ENCODE measurements at regions of chr9 and their contacts with region 1.

Region 1: DNA sequence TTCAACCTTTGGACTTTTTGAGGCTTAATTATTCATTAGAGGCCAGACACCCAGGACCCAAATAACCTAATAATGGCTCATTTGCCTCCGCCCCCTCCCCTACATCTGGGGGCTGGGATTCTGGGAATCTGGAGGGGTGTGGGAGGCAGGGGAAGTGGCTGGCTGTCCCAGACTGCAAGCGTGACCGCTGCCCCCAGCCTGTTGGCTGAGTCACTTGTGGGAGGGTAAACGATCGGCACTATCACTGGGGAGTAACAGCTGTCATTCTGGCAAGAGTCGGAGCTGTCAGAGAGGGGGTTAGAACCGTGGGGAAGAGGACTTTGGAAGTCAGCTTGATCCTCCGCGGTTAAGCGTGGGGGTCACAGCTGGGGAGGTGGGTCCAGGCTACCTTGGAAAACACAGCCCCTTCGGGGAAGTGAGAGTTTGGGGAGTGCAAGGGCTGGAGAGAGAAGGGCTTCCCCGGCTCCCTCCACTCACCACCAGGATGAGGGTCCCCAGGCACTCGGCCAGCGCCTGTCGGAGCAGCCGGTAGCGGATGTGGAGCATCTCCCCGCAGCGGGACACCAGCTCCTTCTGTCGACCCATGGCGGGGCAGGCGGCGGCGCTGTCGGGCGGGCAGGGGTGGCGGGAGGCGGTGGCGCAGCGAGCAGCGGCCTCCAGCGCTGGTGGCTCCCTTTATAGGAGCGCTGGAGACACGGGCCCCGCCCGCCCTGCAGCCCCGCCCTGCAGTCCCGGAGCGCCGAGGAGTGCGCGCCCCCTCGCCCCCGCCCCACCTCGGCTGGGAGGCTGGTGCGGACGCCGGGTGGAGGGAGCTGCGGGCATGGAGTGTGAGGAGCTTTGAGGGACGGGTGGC is at the start of gene AQP3:
- DNase-seq: peak; percentile 65
- CTCF ChIP-seq: peak; percentile 22

Region 2: DNA sequence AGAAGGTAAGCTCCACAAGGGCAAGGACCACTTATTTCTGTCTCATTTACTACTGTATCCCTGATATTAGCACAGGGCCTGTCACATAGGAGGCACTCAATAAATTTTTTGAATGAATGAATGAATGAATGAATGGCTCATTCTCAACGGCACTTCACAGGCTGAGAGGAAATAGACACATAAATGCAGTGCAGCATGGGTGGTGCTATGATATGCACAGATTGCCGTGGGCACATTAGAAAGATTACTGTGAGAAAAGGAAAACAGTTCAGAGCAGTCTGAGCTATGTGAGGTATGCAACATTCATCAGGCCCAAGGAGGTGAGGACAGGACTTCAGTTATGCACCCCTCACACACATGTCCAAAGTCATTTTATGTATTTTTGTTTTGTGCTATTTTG is 32.9 kb after region 1 on chr9:
- CTCF ChIA-PET with region 1: interaction called, 3 read pairs
- POLR2A ChIA-PET with region 1: interaction called, 11 read pairs
- DNase-seq: no peak
- CTCF ChIP-seq: no peak

Measured in GM10248 (cell line).